ENCODE measurements at regions of chr3 and their contacts with region 1.

Region 1: DNA sequence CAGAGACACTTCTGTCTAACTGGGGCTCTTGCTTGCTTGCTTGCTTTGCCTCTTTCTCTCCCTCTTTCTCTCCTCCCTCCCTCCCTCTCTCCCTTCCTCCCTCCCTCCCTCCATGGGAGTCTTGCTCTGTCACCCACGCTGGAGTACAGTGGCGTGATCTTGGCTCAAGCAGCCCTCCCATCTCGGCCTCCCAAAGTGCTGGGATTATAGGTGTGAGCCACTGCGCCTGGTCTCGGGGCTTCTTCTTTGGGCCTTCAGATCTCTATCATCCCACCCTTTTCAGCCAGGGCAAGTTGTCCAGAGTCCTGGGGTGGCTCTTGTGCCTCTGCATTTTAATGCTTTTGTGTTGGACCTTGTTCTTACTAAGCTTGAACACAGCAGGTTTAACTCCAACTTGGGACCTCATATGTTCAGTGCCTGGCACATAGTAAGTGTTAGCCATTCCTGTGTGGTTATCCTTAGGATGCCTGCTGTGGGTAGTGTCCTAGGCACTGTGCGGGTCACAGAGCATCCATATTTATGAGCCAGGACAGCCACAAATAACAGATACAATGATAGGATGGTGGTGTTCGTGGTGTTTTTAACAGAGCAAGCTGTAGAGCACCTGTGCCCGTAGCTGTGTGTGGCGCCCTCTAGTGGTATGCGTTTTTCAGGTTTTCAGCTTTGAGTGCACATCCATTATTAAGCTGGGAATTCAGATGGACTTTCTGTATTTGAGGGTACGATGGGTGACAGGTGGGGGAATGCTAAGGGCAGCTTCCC is 75.1 kb downstream of the CCK start:
- DNase-seq: peak; percentile 74
- H3K4me3 Mint-ChIP-seq: no peak overlapping the region
- H3K27ac Mint-ChIP-seq: no peak overlapping the region
- H3K4me1 Mint-ChIP-seq: peaks cover 4% of the 10 kb centered on the region
- H3K27me3 Mint-ChIP-seq: no peaks in the 10 kb centered on the region

Region 2: GRCh38 chr3:41893977-41894376 is 296.9 kb before region 1 on chr3:
- CTCF ChIA-PET with region 1: interaction called, 32 read pairs
- POLR2A ChIA-PET with region 1: no interaction called
- intact Hi-C with region 1: loop called (anchors 2 kb)
- DNase-seq: no peak
- H3K4me3 Mint-ChIP-seq: no peak overlapping the region
- H3K27ac Mint-ChIP-seq: no peak overlapping the region
- H3K4me1 Mint-ChIP-seq: no peaks in the 10 kb centered on the region
- H3K27me3 Mint-ChIP-seq: no peaks in the 10 kb centered on the region

Region 3: GRCh38 chr3:42169579-42170120 is 21.2 kb before region 1 on chr3:
- CTCF ChIA-PET with region 1: interaction called, 44 read pairs
- POLR2A ChIA-PET with region 1: no interaction called
- intact Hi-C with region 1: no loop called
- DNase-seq: no peak
- H3K4me3 Mint-ChIP-seq: no peak overlapping the region
- H3K27ac Mint-ChIP-seq: no peak overlapping the region
- H3K4me1 Mint-ChIP-seq: peaks cover 15% of the 10 kb centered on the region
- H3K27me3 Mint-ChIP-seq: no peaks in the 10 kb centered on the region

Region 4: GRCh38 chr3:42205800-42206514 is 15.1 kb after region 1 on chr3:
- CTCF ChIA-PET with region 1: interaction called, 22 read pairs
- POLR2A ChIA-PET with region 1: no interaction called
- intact Hi-C with region 1: no loop called
- DNase-seq: no peak
- H3K4me3 Mint-ChIP-seq: no peak overlapping the region
- H3K27ac Mint-ChIP-seq: no peak overlapping the region
- H3K4me1 Mint-ChIP-seq: no peaks in the 10 kb centered on the region
- H3K27me3 Mint-ChIP-seq: no peaks in the 10 kb centered on the region

Region 5: DNA sequence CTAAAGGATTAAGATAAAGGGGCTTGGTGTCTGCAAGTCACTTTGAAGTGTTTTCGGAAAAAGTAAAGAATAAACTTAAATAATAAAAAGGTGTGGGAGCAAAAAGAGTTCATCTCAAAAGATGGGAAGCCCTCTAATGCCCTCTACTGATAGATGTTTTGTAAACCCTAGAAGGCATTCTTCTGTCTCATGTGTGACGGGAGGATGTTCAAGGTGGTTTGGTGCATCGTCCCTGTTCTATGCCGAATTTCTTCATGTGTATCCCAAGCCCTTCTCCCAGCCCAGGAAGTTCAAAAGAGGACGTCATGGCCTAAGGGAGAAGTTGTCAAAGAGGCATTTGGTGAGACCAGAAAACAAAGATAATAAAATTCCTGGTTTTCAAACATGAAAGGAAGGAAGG is 37.9 kb after region 1 on chr3:
- CTCF ChIA-PET with region 1: no interaction called
- POLR2A ChIA-PET with region 1: no interaction called
- intact Hi-C with region 1: no loop called
- DNase-seq: no peak
- H3K4me3 Mint-ChIP-seq: no peak overlapping the region
- H3K27ac Mint-ChIP-seq: no peak overlapping the region
- H3K4me1 Mint-ChIP-seq: no peaks in the 10 kb centered on the region
- H3K27me3 Mint-ChIP-seq: peaks cover 4% of the 10 kb centered on the region

Region 6: DNA sequence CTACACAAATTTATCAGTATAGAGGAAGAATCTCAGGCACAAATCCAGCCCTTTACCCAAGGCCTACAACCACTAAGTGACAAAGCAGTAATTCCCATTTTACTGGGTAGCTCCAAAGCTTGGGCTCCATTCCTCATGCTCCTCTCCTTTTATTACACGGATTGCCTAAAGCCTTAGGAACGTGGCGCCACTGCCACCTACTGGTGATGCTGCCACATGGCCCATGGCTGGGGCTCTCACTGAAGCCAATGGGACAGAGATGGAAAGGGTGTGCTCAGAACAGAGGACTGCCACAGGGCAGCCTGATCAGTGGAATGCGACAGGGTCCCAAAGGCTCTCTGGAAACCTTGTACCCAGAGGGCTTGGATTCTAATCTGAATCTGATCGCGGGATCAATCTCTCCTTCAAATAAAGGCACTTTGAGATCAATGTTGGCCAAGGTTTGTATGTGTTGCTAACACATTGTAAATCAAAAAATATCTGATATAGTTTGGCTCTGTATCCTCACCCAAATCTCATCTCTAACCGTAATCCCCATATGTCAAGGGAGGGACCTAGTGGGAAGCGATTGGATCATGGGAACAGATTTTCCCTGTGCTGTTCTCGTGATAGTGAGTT is 253.0 kb after region 1 on chr3:
- CTCF ChIA-PET with region 1: interaction called, 11 read pairs
- POLR2A ChIA-PET with region 1: no interaction called
- intact Hi-C with region 1: no loop called
- DNase-seq: peak; percentile 85
- H3K4me3 Mint-ChIP-seq: no peak overlapping the region
- H3K27ac Mint-ChIP-seq: no peak overlapping the region
- H3K4me1 Mint-ChIP-seq: no peaks in the 10 kb centered on the region
- H3K27me3 Mint-ChIP-seq: peaks cover 11% of the 10 kb centered on the region